Activated CD4-positive, alpha-beta T cell treated with anti-CD3 and anti-CD28 coated beads, Interleukin-2, amount 10 ng/mL, durations not matched to agents 24 days and 14 days (primary cell): ENCODE measurements at regions of chr18 and their contacts with region 1.

Region 1: DNA sequence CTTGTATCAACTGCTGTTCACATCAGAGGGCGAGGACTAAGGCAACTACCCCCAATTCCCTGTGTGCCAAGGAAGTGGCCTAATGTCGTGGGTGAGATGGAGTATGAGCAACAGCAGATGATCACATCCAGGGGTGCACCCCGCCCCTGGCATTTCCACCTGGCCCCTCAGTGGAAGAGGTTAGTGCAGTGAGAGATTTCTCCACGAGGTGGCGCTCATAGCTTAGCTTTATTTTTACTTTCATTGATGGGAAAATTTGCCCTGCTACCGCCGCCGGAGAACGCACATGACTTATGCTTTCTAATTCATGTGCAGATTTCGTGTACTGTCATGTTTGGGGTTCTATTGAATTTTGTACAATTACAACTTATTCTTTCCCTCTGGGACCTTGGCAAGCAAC is 470.6 kb upstream of the MEX3C start:
- DNase-seq: peak; percentile 84
- H3K4me3 Mint-ChIP-seq: no peak overlapping the region
- H3K27ac Mint-ChIP-seq: no peak overlapping the region
- H3K4me1 Mint-ChIP-seq: peaks cover 2% of the 10 kb centered on the region
- H3K27me3 Mint-ChIP-seq: no peaks in the 10 kb centered on the region

Region 2: DNA sequence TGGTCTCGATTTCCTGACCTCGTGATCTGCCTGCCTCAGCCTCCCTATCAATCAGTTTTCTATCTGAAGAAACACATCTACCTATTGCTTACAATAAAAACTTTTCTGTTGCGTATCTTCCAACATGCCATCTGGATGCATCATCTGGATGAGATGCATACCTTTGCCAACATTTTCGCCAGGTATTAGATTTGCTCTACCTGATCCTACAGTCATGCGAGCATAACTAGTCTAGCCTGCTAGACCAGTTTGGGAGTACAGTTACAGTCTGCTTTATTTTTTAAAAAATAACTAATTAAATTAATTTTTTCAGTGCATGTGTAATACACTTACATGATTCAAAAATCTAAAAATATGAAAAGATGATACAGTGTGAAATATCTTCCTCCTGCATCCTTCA is 136.6 kb before region 1 on chr18:
- intact Hi-C with region 1: no loop called
- DNase-seq: no peak
- H3K4me3 Mint-ChIP-seq: no peak overlapping the region
- H3K27ac Mint-ChIP-seq: no peak overlapping the region
- H3K4me1 Mint-ChIP-seq: no peaks in the 10 kb centered on the region
- H3K27me3 Mint-ChIP-seq: peaks cover 2% of the 10 kb centered on the region

Region 3: DNA sequence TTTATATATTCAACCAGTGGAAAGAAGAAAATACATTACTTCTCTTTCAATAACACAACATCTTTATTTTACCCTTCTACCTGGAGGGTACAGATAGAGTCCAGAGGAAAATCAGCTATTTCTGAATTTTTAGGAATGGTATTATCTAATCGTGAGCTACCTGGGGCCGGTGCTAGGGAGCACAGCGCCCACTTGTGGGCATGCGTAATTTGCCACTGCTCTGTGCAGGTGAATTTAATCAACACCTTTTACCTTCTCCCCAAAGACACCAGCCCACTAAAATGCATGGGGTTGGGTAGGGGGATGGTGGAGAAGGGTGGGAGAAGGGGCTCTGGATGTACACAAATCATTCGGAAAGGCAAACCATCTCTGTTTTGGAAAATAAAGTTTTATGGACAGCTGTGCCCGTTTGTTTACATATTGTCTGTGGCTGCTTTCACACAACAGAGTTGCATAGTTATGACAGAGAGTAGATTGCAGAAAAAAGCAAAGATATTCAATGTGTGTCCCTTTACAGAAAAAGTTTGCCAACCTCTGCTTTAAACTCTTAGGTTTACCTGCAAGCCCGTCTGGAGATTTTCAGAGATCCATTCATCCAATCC is 620.4 kb after region 1 on chr18:
- intact Hi-C with region 1: loop called (anchors 2 kb)
- DNase-seq: peak; percentile 65
- H3K4me3 Mint-ChIP-seq: no peak overlapping the region
- H3K27ac Mint-ChIP-seq: no peak overlapping the region
- H3K4me1 Mint-ChIP-seq: no peaks in the 10 kb centered on the region
- H3K27me3 Mint-ChIP-seq: no peaks in the 10 kb centered on the region